CD4-positive, alpha-beta memory T cell (primary cell): ENCODE measurements at regions of chr4 and their contacts with region 1.

Region 1: DNA sequence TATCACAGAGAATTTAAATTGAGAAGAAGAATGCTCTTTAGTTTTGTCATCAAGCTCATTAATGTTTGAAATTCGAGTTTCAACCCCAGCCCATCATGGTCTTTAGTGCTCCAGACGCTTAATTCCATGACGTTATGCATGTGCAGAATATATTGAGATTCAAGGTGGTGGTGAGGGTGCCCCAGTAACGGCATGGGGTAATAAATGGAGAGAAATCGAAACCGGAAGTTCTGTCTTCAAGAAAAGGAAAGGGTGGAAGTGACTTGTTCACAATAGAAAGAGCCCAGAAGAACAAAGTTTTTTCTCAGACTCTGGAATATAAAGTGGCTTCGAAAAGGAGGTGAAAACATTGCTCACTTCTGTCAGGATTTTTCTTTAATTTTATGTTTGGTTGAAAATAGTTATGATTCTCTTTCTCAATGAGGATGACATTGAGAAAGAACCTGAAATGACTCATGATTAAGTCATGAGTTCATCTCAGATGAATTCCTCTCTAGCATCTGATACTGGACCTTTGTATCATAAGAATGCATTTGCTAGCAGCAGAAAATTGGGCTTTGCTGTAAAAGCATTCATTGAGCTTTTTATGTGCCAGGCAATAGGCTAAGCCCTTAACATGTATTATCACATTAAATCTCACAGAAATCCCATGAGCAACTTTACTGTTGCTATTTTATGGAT is 779 bp upstream of the DDX60L start:
- DNase-seq: peak; percentile 74 to 82 (median 81)
- H3K4me3 ChIP-seq: peak overlapping the region; percentile 65 to 74
- H3K4me3 Mint-ChIP-seq: peak overlapping the region; percentile 98 to 100 (median 100)
- H3K27ac ChIP-seq: peak overlapping the region; percentile 93
- H3K27ac Mint-ChIP-seq: peak overlapping the region; percentile 97 to 99 (median 99)
- H3K4me1 ChIP-seq: peaks cover 54% of the 10 kb centered on the region
- H3K4me1 Mint-ChIP-seq: peaks cover 48 to 79% (median 66%) of the 10 kb centered on the region in 4 donors
- H3K27me3 ChIP-seq: no peaks in the 10 kb centered on the region
- H3K27me3 Mint-ChIP-seq: no peaks in the 10 kb centered on the region

Region 2: DNA sequence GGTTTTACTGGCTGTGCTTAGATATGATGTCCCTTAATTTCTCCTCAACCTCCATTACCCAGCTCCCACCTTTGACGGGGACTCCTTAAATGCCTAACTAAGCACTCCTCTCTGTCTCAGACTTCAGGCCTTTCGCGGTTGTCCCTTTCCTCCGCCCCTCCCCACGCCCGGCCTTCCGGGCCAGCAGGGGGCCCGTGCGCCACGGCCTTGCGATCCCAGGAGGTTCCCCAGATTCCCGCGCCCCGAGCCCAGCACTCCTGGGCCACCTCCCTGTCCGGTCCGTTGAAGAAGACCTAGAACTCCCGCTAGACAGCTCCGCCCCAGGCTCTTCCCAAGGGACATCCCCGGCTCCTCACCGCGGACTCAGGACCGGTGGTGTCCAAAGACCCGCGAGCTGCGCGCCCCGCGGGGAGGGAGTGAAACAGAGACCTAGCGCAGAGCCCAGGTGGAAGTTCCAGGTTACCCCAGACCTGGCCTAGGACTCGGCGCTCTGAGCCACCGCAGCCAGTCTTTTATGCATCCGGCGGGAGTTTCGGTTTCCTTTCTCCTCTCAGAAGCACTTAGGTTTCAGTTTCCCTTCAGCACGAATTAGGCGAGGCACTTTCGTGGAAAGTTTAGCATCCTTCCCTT is 162.7 kb before region 1 on chr4 and contains the start of gene DDX60:
- CTCF ChIA-PET with region 1: interaction called, 6 read pairs
- POLR2A ChIA-PET with region 1: interaction called, 35 read pairs
- intact Hi-C with region 1: loop called (anchors 1 kb)
- DNase-seq: peak; percentile 82 to 93 (median 86)
- H3K4me3 ChIP-seq: peak within 1 kb of the TSS; percentile 68 to 98
- H3K4me3 Mint-ChIP-seq: peak within 1 kb of the TSS; percentile 95 to 98 (median 97)
- H3K27ac ChIP-seq: peak within 1 kb of the TSS; percentile 97
- H3K27ac Mint-ChIP-seq: peak within 1 kb of the TSS; percentile 98 to 99 (median 98)
- H3K4me1 ChIP-seq: peaks cover 28% of the 10 kb centered on the region
- H3K4me1 Mint-ChIP-seq: peaks cover 37 to 53% (median 40%) of the 10 kb centered on the region in 4 donors
- H3K27me3 ChIP-seq: no peaks in the 10 kb centered on the region
- H3K27me3 Mint-ChIP-seq: no peaks in the 10 kb centered on the region
- total RNA-seq, gene DDX60: 33.1 to 33.9 TPM

Region 3: DNA sequence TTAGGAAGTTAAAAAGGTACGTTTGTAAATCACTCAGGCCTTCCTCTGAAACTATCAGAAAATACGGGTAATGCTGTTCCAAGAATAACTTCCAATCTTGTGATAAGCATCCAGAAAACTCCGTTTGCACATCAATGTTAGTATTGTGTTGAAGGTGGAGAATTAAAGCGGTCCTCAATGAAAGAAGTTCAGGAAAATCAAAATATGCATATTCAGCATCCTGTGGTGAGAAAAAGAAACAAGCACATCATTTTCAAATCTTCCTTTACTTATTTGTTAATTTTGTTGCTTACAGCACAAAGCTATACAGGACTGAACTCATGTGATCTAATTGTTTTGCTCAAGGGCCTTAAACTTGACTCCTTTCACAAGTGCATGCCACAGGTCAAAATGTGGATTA is 19.2 kb before region 1 on chr4:
- CTCF ChIA-PET with region 1: no interaction called
- POLR2A ChIA-PET with region 1: interaction called, 11 read pairs
- intact Hi-C with region 1: no loop called
- DNase-seq: no peak
- H3K4me3 ChIP-seq: no peak overlapping the region
- H3K4me3 Mint-ChIP-seq: no peak overlapping the region
- H3K27ac ChIP-seq: no peak overlapping the region
- H3K27ac Mint-ChIP-seq: no peak overlapping the region
- H3K4me1 ChIP-seq: no peaks in the 10 kb centered on the region
- H3K4me1 Mint-ChIP-seq: peaks cover 0 to 4% (median 2%) of the 10 kb centered on the region in 4 donors
- H3K27me3 ChIP-seq: no peaks in the 10 kb centered on the region
- H3K27me3 Mint-ChIP-seq: no peaks in the 10 kb centered on the region

Region 4: GRCh38 chr4:168514249-168514852 is 33.3 kb after region 1 on chr4:
- CTCF ChIA-PET with region 1: interaction called, 4 read pairs
- POLR2A ChIA-PET with region 1: interaction called, 14 read pairs
- intact Hi-C with region 1: loop called (anchors 1 kb)
- DNase-seq: peak in 4 of 5 donors; percentile 18 to 29 (median 22)
- H3K4me3 ChIP-seq: no peak overlapping the region
- H3K4me3 Mint-ChIP-seq: no peak overlapping the region
- H3K27ac ChIP-seq: no peak overlapping the region
- H3K27ac Mint-ChIP-seq: peak overlapping the region in 1 of 7 donors; percentile 53
- H3K4me1 ChIP-seq: peaks cover 35% of the 10 kb centered on the region
- H3K4me1 Mint-ChIP-seq: peaks cover 24 to 42% (median 33%) of the 10 kb centered on the region in 4 donors
- H3K27me3 ChIP-seq: no peaks in the 10 kb centered on the region
- H3K27me3 Mint-ChIP-seq: no peaks in the 10 kb centered on the region

Region 5: GRCh38 chr4:168550071-168550766 is 69.1 kb after region 1 on chr4:
- CTCF ChIA-PET with region 1: no interaction called
- POLR2A ChIA-PET with region 1: no interaction called
- intact Hi-C with region 1: no loop called
- DNase-seq: no peak
- H3K4me3 ChIP-seq: no peak overlapping the region
- H3K4me3 Mint-ChIP-seq: no peak overlapping the region
- H3K27ac ChIP-seq: no peak overlapping the region
- H3K27ac Mint-ChIP-seq: no peak overlapping the region
- H3K4me1 ChIP-seq: no peaks in the 10 kb centered on the region
- H3K4me1 Mint-ChIP-seq: peaks cover 0 to 1% (median 0%) of the 10 kb centered on the region in 4 donors
- H3K27me3 ChIP-seq: no peaks in the 10 kb centered on the region
- H3K27me3 Mint-ChIP-seq: peaks cover 2 to 6% of the 10 kb centered on the region in 2 donors

Region 6: DNA sequence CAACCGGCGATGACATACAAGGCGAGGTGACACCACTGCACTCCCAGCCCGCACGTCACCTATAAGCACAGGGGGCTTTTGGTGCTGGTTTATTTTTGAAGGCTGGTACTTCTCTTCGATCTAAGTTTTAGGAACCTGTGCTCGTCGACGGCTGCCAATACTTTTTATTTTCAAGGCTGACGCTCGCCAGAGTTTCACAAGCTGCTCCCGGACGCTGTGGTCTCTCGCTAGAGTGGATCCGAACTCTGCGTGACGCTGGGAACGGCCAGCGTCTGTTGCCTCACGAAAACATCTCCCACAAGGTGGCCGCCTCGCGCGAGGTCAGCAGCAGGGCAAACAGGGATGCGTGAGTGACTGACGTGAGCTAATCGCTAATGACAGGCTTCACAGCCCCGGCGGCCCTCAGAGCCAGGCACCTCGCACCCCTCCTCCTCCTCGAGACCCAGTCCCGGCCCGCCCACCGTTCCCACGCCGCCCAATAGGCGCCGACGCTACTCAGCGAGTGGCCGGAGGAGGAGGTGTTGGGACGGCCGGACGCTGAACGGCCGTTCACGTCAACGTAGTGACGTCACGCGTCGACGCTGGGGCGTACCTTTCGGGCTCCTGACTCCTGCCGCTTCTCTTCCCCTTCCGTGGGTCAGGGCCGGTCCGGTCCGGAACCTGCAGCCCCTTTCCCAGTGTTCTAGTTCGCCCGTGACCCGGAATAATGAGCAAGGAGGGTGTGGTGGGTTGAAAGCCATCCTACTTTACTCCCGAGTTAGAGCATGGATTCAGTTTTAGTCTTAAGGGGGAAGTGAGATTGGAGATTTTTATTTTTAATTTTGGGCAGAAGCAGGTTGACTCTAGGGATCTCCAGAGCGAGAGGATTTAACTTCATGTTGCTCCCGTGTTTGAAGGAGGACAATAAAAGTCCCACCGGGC is 1139.1 kb after region 1 on chr4 and contains the start of gene CLCN3:
- CTCF ChIA-PET with region 1: no interaction called
- POLR2A ChIA-PET with region 1: interaction called, 5 read pairs
- intact Hi-C with region 1: loop called (anchors 2 kb)
- DNase-seq: peak; percentile 80 to 91 (median 83)
- H3K4me3 ChIP-seq: peak within 1 kb of the TSS; percentile 94 to 97
- H3K4me3 Mint-ChIP-seq: peak within 1 kb of the TSS; percentile 88 to 100 (median 96)
- H3K27ac ChIP-seq: peak within 1 kb of the TSS; percentile 87
- H3K27ac Mint-ChIP-seq: peak within 1 kb of the TSS; percentile 94 to 100 (median 99)
- H3K4me1 ChIP-seq: peaks cover 38% of the 10 kb centered on the region
- H3K4me1 Mint-ChIP-seq: peaks cover 36 to 72% (median 52%) of the 10 kb centered on the region in 4 donors
- H3K27me3 ChIP-seq: no peaks in the 10 kb centered on the region
- H3K27me3 Mint-ChIP-seq: no peaks in the 10 kb centered on the region
- total RNA-seq, gene CLCN3: 37.5 to 37.7 TPM

Region 7: DNA sequence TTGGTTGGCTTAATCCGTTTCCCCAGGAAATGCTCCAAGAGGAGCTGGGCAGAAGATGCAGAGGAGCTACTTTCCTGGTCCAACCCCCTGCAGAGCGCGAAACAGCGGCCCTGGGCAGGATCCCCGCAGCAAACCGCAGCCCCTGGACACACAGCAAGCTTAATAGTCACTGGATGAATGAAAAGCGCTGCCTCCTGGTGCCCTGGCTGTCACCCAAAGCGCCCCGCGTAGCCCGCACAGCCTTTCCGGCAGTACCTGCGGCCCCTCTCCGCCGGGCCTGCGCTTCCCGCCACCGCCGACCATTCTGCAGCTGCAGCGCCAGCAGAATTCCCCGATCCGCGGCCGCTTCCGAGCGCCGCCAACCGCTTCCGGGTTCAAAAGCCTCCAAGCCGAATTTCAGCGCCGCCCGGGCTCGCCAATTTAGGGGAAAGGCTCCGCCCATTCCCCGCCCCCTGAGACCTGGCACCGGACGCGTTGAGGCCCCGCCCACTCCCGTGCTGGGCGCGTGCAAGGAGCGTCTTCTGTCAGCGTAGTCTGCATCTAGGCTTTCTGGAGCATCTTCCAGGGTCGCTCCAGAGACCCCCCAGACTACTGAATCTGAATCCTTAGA is 1276.6 kb after region 1 on chr4 and contains the start of gene HPF1:
- CTCF ChIA-PET with region 1: no interaction called
- POLR2A ChIA-PET with region 1: no interaction called
- intact Hi-C with region 1: loop called (anchors 5 kb)
- DNase-seq: peak; percentile 89 to 93 (median 90)
- H3K4me3 ChIP-seq: peak within 1 kb of the TSS; percentile 83 to 89
- H3K4me3 Mint-ChIP-seq: peak within 1 kb of the TSS; percentile 83 to 93 (median 88)
- H3K27ac ChIP-seq: peak within 1 kb of the TSS; percentile 54
- H3K27ac Mint-ChIP-seq: peak within 1 kb of the TSS; percentile 12 to 85 (median 53)
- H3K4me1 ChIP-seq: peaks cover 18% of the 10 kb centered on the region
- H3K4me1 Mint-ChIP-seq: peaks cover 23 to 33% (median 26%) of the 10 kb centered on the region in 4 donors
- H3K27me3 ChIP-seq: no peaks in the 10 kb centered on the region
- H3K27me3 Mint-ChIP-seq: no peaks in the 10 kb centered on the region
- total RNA-seq, gene HPF1: 14.4 to 15.0 TPM

Region 8: GRCh38 chr4:170027181-170027829 is 1546.2 kb after region 1 on chr4:
- CTCF ChIA-PET with region 1: no interaction called
- POLR2A ChIA-PET with region 1: interaction called, 3 read pairs
- intact Hi-C with region 1: loop called (anchors 2 kb)
- DNase-seq: peak; percentile 88 to 93 (median 92)
- H3K4me3 ChIP-seq: peak overlapping the region; percentile 70 to 93
- H3K4me3 Mint-ChIP-seq: peak overlapping the region; percentile 85 to 94 (median 92)
- H3K27ac ChIP-seq: peak overlapping the region; percentile 18
- H3K27ac Mint-ChIP-seq: peak overlapping the region; percentile 82 to 95 (median 88)
- H3K4me1 ChIP-seq: peaks cover 12% of the 10 kb centered on the region
- H3K4me1 Mint-ChIP-seq: peaks cover 5 to 15% (median 8%) of the 10 kb centered on the region in 4 donors
- H3K27me3 ChIP-seq: no peaks in the 10 kb centered on the region
- H3K27me3 Mint-ChIP-seq: peaks cover 2 to 7% of the 10 kb centered on the region in 2 donors